ENCODE measurements at regions of chr4 and their contacts with region 1.

Region 1: GRCh38 chr4:152063885-152064240 is 303.1 kb upstream of the GATB start:
- DNase-seq: peak; percentile 19 to 75 (median 39)
- ATAC-seq: peak; percentile 98
- H3K4me3 ChIP-seq: no peak overlapping the region
- H3K4me3 Mint-ChIP-seq: no peak overlapping the region
- H3K27ac ChIP-seq: no peak overlapping the region
- H3K27ac Mint-ChIP-seq: peak overlapping the region; percentile 25
- H3K4me1 ChIP-seq: peaks cover 30% of the 10 kb centered on the region
- H3K4me1 Mint-ChIP-seq: peaks cover 59% of the 10 kb centered on the region
- H3K27me3 ChIP-seq: no peaks in the 10 kb centered on the region
- H3K27me3 Mint-ChIP-seq: no peaks in the 10 kb centered on the region
- CTCF ChIP-seq: no peak

Region 2: GRCh38 chr4:152039023-152039481 is 24.8 kb before region 1 on chr4:
- CTCF ChIA-PET with region 1: no interaction called
- POLR2A ChIA-PET with region 1: no interaction called
- intact Hi-C with region 1: no loop called
- DNase-seq: no peak
- ATAC-seq: no peak
- H3K4me3 ChIP-seq: no peak overlapping the region
- H3K4me3 Mint-ChIP-seq: no peak overlapping the region
- H3K27ac ChIP-seq: no peak overlapping the region
- H3K27ac Mint-ChIP-seq: no peak overlapping the region
- H3K4me1 ChIP-seq: no peaks in the 10 kb centered on the region
- H3K4me1 Mint-ChIP-seq: no peaks in the 10 kb centered on the region
- H3K27me3 ChIP-seq: no peaks in the 10 kb centered on the region
- H3K27me3 Mint-ChIP-seq: no peaks in the 10 kb centered on the region
- CTCF ChIP-seq: no peak

Region 3: DNA sequence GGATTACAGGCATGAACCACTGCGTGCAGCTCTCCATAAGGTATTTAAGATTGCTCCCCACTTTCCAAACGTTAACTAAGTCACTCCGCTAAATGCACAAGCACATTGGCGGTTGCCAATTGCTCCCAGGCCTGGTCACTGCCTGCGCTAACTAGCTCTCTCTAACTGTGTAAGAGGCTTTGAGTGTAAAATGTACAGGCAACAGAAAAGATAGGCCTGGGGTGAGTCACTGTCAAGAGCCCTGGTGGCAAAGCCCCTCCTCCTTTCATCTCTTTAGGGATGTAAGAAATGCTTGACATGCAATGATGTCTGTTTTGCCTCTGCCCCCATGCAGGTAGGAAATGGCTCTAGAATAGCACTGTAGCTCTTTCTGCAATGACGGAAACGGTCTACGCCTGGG is 26.7 kb after region 1 on chr4:
- CTCF ChIA-PET with region 1: no interaction called
- POLR2A ChIA-PET with region 1: no interaction called
- intact Hi-C with region 1: no loop called
- DNase-seq: peak in 3 of 14 experiments; percentile 38 to 54 (median 43)
- ATAC-seq: peak; percentile 40
- H3K4me3 ChIP-seq: no peak overlapping the region
- H3K4me3 Mint-ChIP-seq: no peak overlapping the region
- H3K27ac ChIP-seq: no peak overlapping the region
- H3K27ac Mint-ChIP-seq: no peak overlapping the region
- H3K4me1 ChIP-seq: peaks cover 42% of the 10 kb centered on the region
- H3K4me1 Mint-ChIP-seq: peaks cover 62% of the 10 kb centered on the region
- H3K27me3 ChIP-seq: no peaks in the 10 kb centered on the region
- H3K27me3 Mint-ChIP-seq: no peaks in the 10 kb centered on the region
- CTCF ChIP-seq: no peak

Region 4: DNA sequence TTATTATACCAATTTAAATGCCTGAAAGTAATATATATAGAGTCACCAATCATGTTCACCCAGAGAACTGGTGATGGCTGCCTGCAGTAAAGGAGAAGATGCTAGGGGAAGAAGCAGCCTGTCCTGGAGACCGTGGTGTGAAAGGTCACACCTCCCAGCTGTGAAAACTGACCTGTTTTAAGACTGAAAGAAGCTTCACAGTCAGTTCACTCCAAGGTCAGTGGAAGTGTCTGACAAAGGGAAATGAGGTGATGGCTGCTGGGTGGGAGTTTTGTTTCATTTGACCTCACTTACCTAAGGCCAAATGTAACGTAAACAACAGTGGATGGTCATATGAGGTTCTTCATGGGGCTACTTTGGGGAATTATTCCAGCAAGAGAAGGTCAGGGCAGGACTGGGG is 49.0 kb after region 1 on chr4:
- CTCF ChIA-PET with region 1: no interaction called
- POLR2A ChIA-PET with region 1: no interaction called
- intact Hi-C with region 1: loop called in 1 of 2 experiments (anchors 5 kb)
- DNase-seq: peak in 1 of 14 experiments; percentile 20
- ATAC-seq: no peak
- H3K4me3 ChIP-seq: no peak overlapping the region
- H3K4me3 Mint-ChIP-seq: no peak overlapping the region
- H3K27ac ChIP-seq: no peak overlapping the region
- H3K27ac Mint-ChIP-seq: peak overlapping the region; percentile 93
- H3K4me1 ChIP-seq: peaks cover 71% of the 10 kb centered on the region
- H3K4me1 Mint-ChIP-seq: peaks cover 90% of the 10 kb centered on the region
- H3K27me3 ChIP-seq: no peaks in the 10 kb centered on the region
- H3K27me3 Mint-ChIP-seq: no peaks in the 10 kb centered on the region
- CTCF ChIP-seq: no peak

Region 5: DNA sequence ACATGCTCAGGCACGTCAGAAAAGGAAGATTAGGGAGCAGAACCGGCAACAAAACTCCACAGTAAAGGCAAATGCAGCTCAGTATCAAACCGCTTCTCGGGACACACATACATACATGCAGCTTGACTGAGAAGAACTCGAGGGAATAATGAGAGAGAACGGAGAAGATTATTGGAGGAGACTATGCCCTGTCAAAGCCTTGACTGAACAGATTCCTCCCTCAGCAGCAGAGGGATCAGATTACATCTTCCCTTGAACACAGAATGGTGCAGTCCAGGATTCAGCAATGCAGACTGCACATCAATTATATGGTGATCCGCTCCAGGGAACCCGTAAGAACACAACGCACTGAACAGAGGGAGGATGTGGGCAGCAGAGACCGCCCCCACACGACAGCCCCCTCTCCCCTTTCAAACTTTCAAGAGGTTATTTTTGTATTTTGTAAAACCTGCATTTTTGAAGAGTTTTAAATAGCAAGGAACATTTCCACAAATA is 288.8 kb after region 1 on chr4:
- CTCF ChIA-PET with region 1: no interaction called
- POLR2A ChIA-PET with region 1: no interaction called
- intact Hi-C with region 1: loop called (anchors 5 to 10 kb)
- DNase-seq: peak in 4 of 14 experiments; percentile 9 to 39 (median 26)
- ATAC-seq: peak; percentile 88
- H3K4me3 ChIP-seq: no peak overlapping the region
- H3K4me3 Mint-ChIP-seq: peak overlapping the region; percentile 50
- H3K27ac ChIP-seq: no peak overlapping the region
- H3K27ac Mint-ChIP-seq: no peak overlapping the region
- H3K4me1 ChIP-seq: no peaks in the 10 kb centered on the region
- H3K4me1 Mint-ChIP-seq: peaks cover 36% of the 10 kb centered on the region
- H3K27me3 ChIP-seq: no peaks in the 10 kb centered on the region
- H3K27me3 Mint-ChIP-seq: no peaks in the 10 kb centered on the region
- CTCF ChIP-seq: no peak